ENCODE measurements at regions of chr6 and their contacts with region 1.

Region 1: GRCh38 chr6:30556066-30556905 is at the start of gene GNL1:
- DNase-seq: peak; percentile 97
- H3K4me3 ChIP-seq: peak within 1 kb of the TSS; percentile 77 to 94 (median 85)
- H3K27ac ChIP-seq: peak within 1 kb of the TSS; percentile 96 to 100 (median 98)
- H3K4me1 ChIP-seq: peaks cover 0 to 28% (median 21%) of the 10 kb centered on the region in 4 donors
- H3K27me3 ChIP-seq: no peaks in the 10 kb centered on the region
- CTCF ChIP-seq: no peak
- EP300 ChIP-seq: peak in 1 of 4 donors; percentile 5
- POLR2A ChIP-seq: peak; percentile 5 to 23
- total RNA-seq, gene GNL1: 31.6 to 36.3 (median 33.7) TPM

Region 2: DNA sequence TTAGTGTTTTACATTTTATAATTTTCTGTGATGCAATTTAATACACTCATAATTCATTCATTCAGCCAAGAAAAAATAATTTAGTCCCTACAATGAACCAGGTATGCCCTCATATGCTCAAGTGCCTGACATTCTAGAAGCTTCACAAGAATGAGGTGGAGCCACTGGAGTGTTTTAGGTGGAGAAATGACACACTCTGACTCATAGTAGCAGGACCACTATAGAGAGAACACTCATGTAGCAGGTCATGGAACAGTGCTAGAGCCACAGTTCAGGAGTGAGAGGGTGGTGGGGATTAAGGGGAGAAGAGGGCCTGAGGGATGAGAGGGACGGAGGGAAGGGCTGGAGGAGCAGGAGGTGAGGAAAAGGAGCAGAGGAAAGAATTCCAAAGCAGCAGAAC is 730.0 kb before region 1 on chr6:
- intact Hi-C with region 1: no loop called
- DNase-seq: no peak
- H3K4me3 ChIP-seq: no peak overlapping the region
- H3K27ac ChIP-seq: no peak overlapping the region
- H3K4me1 ChIP-seq: peaks cover 0 to 12% (median 11%) of the 10 kb centered on the region in 4 donors
- H3K27me3 ChIP-seq: peaks cover 0 to 47% (median 33%) of the 10 kb centered on the region in 3 donors
- CTCF ChIP-seq: no peak
- EP300 ChIP-seq: no peak
- POLR2A ChIP-seq: no peak

Region 3: DNA sequence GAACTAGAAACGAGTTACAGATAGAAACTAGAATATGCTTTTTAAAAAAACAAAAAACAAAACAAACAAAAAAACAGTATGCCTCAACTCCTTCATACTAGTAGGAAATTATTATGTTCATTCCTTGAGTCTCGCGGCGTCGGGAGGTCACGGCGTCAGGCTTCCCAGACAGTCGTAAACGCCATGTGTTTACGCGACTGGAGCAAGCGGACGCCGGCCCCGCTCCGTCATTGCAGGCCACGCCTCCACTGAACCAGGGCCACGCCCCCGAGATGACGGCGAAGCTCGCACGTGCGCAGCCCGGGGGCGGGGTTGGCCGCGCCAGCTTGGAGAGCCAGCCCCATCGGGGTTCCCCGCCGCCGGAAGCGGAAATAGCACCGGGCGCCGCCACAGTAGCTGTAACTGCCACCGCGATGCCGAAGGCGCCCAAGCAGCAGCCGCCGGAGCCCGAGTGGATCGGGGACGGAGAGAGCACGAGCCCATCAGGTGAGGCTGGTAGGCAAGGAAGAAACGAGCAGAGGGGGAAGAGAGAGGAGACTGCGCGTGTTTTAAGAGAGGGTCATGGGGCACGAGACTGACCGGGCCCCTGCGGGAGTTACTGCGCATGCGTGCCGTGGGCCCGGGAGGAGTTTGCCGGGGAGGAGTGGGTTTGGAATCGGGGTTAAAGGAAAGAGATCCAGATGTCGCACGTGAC is 14.9 kb after region 1 on chr6 and contains the start of gene ABCF1:
- intact Hi-C with region 1: loop called (anchors 2 kb)
- DNase-seq: peak; percentile 99
- H3K4me3 ChIP-seq: peak within 1 kb of the TSS; percentile 52 to 66 (median 62)
- H3K27ac ChIP-seq: peak within 1 kb of the TSS; percentile 84 to 91 (median 90)
- H3K4me1 ChIP-seq: peaks cover 0 to 38% (median 30%) of the 10 kb centered on the region in 4 donors
- H3K27me3 ChIP-seq: no peaks in the 10 kb centered on the region
- CTCF ChIP-seq: no peak
- EP300 ChIP-seq: peak in 2 of 4 donors; percentile 15 to 53
- POLR2A ChIP-seq: peak; percentile 34 to 78
- total RNA-seq, gene ABCF1: 26.9 to 38.8 (median 33.6) TPM